Ascending aorta (tissue), 2 donors: ENCODE measurements at regions of chr17 and their contacts with region 1.

Region 1: GRCh38 chr17:77319211-77320043 is 178.7 kb downstream of the SEC14L1 start:
- DNase-seq: peak; percentile 75 to 97
- H3K4me3 ChIP-seq: peak overlapping the region; percentile 59 to 64
- H3K27ac ChIP-seq: peak overlapping the region; percentile 92 to 98
- H3K4me1 ChIP-seq: peaks cover 34 to 59% of the 10 kb centered on the region in 2 donors
- H3K27me3 ChIP-seq: no peaks in the 10 kb centered on the region
- CTCF ChIP-seq: no peak

Region 2: DNA sequence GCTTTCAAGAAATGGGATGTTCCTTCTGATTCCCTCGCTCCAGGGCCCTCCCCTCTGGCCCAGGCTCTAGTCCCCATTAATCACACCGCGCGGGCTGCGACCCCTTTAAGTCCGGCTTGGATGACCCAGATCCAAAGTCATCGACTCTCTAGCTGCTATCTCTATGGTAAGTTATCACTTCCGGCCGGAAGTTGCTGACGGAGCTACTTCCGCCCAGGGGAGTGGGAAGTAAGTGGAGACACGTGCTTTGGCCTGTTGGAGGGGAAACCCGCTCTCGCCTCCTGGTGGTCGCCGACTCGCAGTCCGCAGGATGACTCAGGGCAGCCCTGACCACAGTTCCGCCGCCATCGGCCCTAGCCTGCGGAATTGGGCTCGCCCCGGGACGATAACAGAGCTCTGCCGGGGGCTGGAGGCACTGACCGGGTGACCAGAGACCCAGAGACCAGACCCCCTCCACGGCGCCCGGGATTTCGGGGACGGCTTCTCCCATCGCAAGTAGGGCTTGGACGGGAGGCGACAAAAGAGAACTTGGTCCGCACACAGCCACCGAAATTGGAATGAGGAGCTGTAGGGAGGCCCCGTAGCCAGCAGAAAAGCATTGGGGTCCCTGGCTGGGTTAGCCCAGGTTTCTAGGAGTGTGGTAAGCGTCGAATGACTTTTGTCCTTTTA is 230.8 kb before region 1 on chr17:
- intact Hi-C with region 1: loop called (anchors 5 kb)
- DNase-seq: peak; percentile 81 to 98
- H3K4me3 ChIP-seq: peak overlapping the region; percentile 79 to 90
- H3K27ac ChIP-seq: peak overlapping the region; percentile 89 to 92
- H3K4me1 ChIP-seq: peaks cover 0 to 16% of the 10 kb centered on the region in 2 donors
- H3K27me3 ChIP-seq: no peaks in the 10 kb centered on the region
- CTCF ChIP-seq: peak; percentile 78 to 91 (median 81)

Region 3: GRCh38 chr17:77287432-77288071 is 31.9 kb before region 1 on chr17:
- intact Hi-C with region 1: loop called (anchors 2 kb)
- DNase-seq: no peak
- H3K4me3 ChIP-seq: no peak overlapping the region
- H3K27ac ChIP-seq: peak overlapping the region; percentile 44 to 70
- H3K4me1 ChIP-seq: peaks cover 0 to 16% of the 10 kb centered on the region in 2 donors
- H3K27me3 ChIP-seq: no peaks in the 10 kb centered on the region
- CTCF ChIP-seq: no peak

Region 4: DNA sequence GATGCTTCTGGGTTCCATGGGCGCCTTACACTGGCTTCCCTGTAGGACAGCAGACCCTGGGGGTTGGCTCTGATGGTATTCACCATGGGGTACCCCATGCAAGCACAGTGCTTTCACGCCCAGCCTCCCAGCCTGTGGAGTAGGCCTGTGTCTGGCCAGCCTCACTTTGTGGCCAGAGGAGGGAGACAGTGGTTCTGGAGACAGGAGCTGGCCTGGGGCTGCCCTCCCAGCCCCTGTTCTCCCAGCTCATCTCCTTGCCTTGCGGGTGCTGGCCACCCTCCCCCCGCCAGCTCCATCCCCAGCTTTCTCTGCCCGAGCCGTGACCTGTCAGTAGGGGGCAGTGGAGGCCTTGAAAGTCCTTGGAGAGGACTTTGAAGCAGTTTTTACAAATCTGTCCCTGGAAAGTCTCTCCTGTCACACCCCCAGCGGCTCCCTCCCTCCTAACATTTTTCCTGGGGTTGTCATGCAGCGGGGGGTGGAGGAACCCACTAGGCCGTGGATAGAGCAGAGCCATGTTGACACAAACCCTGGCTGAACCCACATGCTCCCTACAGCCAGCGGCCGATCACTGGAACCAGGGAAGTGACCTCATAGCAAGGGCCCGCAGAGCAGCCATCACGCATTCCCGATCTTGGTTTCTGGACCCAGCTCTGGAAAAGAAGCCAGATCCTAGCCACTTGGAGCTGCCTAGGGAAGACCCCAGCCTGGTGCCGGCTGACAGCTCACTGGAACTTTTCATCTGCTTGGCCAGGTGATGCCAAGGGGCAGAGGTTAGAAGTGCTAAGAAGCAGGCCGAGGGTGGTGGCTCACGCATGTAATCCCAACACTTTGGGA is 110.7 kb after region 1 on chr17:
- intact Hi-C with region 1: loop called (anchors 2 kb)
- DNase-seq: peak; percentile 90 to 98
- H3K4me3 ChIP-seq: no peak overlapping the region
- H3K27ac ChIP-seq: peak overlapping the region; percentile 79 to 81
- H3K4me1 ChIP-seq: peaks cover 32 to 50% of the 10 kb centered on the region in 2 donors
- H3K27me3 ChIP-seq: no peaks in the 10 kb centered on the region
- CTCF ChIP-seq: peak; percentile 85 to 93 (median 85)

Region 5: DNA sequence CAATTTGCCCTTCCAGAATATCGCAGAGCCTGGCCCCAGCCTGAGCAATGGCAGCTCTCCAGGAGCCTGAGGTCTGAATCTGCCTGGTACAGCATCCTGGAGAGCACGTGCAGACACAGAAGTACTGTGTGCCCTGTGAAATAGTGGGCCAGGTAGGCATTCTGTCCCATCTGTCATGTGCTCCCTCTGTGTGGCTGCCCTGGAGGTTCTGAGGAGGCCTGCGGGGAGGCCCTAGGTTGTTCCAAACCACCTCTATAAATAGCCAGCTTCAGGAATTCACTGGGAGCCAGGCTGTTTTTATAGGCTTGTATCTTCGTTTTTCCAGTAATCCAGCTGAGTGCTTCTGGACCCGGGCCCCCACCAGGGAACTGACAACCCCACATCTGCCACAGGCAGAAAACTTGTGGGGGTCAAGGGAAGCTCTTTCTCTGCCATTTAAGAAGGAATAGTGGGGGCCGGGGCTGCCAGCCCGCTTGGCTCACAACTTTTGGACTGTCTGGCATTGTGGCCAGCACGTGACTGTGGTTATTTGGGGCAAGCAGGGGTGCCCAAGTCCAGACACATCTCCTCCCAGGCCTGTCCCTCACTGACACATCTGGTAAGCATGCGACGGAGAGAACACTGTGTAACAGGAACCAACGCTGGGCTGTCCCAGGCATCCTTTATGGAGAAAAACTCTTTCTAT is 282.8 kb after region 1 on chr17:
- intact Hi-C with region 1: loop called (anchors 5 kb)
- DNase-seq: peak; percentile 72 to 95
- H3K4me3 ChIP-seq: peak overlapping the region; percentile 19 to 46
- H3K27ac ChIP-seq: peak overlapping the region; percentile 98 to 99
- H3K4me1 ChIP-seq: peaks cover 23 to 41% of the 10 kb centered on the region in 2 donors
- H3K27me3 ChIP-seq: no peaks in the 10 kb centered on the region
- CTCF ChIP-seq: no peak

Region 6: DNA sequence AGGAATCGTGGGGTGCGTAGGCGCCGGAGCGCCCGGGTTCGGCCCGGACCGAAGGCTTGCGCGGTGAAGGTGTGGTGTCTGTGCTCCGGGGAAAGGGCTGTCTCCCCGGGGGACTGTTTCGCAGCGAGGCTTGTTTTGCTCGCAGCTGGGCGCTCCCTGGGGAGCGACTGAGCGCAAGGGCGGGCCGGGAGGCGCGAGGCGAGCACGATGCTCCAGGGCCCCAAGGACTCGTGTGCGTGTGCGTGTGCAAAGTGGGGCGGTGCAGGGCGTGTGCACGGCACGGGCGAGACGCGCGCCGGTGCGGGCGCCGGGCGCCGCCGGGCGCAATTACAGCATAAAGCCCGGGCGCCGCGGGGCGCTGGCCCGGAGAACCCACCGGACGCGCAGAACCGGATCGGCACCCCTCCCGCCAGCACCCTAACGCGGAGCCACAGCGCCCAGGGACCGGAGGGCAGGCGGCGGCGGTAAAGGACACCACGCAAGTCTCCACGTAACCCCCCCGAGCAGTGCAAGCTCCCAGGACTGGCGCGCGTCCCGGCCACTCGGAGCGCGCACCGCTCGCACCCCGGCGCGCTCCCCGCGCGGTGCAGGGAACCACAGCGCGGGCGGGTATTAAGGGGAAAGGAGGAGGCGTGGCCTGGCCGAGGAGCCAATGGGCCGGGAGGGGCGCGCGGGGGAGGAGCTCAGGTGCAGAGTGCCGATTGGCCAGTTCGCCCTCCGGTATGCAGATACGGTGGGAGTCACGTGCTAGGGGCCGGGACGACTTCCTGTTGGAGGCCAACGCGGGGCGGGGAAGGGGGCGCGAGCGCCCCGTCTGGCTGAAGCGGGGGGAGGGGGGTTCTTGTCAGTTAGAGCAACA is 638.7 kb after region 1 on chr17 and contains the start of gene TNRC6C:
- intact Hi-C with region 1: loop called (anchors 10 kb)
- DNase-seq: peak; percentile 99 to 100
- H3K4me3 ChIP-seq: peak within 1 kb of the TSS; percentile 54 to 81
- H3K27ac ChIP-seq: peak within 1 kb of the TSS; percentile 77 to 78
- H3K4me1 ChIP-seq: peaks cover 0 to 17% of the 10 kb centered on the region in 2 donors
- H3K27me3 ChIP-seq: no peaks in the 10 kb centered on the region
- CTCF ChIP-seq: peak in 1 of 3 experiments; percentile 16
- total RNA-seq, gene TNRC6C: 25.8 TPM